ENCODE measurements at regions of chr2 and their contacts with region 1.

Region 1: GRCh38 chr2:11446733-11447248 is 19.2 kb downstream of the E2F6 start:
- DNase-seq: peak; percentile 42
- CTCF ChIP-seq: peak; percentile 67

Region 2: GRCh38 chr2:10832203-10832936 is 614.4 kb before region 1 on chr2:
- in situ Hi-C with region 1: loop called (anchors 25 kb)
- DNase-seq: peak; percentile 90
- CTCF ChIP-seq: peak; percentile 98

Region 3: GRCh38 chr2:10993001-10993481 is 453.8 kb before region 1 on chr2:
- in situ Hi-C with region 1: no loop called
- DNase-seq: no peak
- CTCF ChIP-seq: no peak

Region 4: GRCh38 chr2:11320698-11321492 is 125.9 kb before region 1 on chr2:
- in situ Hi-C with region 1: no loop called
- DNase-seq: no peak
- CTCF ChIP-seq: no peak

Region 5: GRCh38 chr2:11716689-11717321 is 270.0 kb after region 1 on chr2:
- in situ Hi-C with region 1: no loop called
- DNase-seq: no peak
- CTCF ChIP-seq: no peak